Activated T-helper 1 cell treated with anti-CD3 and anti-CD28 coated beads, Interleukin-12 subunit alpha, Interleukin-12 subunit beta, Interleukin-2, Interleukin-4 antibody, amounts not matched to agents 30 ng/mL and 10 ng/mL and 1 ng/mL, durations not matched to agents 14 hours and 24 hours and 36 hours (primary cell): ENCODE measurements at regions of chr7 and their contacts with region 1.

Region 1: DNA sequence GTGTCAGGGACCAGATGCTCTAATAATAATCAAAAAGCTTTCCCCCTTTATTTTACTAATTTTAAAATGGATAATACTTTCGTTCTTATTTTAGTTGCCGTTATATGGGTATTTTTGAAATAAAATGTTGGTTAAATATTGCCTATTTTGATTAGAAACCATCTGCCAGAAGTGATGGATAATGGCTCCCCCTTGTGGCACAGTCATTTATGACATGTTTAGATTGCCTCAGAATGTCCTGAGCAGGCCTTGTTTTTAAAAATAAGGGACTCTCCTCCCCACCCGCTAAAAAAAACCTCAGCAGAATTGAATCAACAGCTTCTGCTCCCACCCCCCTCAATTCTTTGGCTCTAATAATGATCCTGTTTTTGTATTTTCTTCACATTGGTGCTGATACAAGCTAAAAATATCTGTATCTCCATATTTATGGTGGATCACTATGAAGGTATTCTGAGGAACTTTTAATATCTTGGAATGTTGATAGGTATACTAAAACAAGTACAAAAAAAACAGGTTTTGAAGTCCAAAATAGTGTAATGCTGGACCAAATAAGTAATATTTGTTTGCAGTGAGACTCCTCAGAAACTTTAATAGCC is 38.8 kb downstream of the TMEM60 start:
- DNase-seq: peak; percentile 51
- H3K4me3 Mint-ChIP-seq: no peak overlapping the region
- H3K27ac Mint-ChIP-seq: no peak overlapping the region
- H3K4me1 Mint-ChIP-seq: peaks cover 25% of the 10 kb centered on the region
- H3K27me3 Mint-ChIP-seq: no peaks in the 10 kb centered on the region

Region 2: DNA sequence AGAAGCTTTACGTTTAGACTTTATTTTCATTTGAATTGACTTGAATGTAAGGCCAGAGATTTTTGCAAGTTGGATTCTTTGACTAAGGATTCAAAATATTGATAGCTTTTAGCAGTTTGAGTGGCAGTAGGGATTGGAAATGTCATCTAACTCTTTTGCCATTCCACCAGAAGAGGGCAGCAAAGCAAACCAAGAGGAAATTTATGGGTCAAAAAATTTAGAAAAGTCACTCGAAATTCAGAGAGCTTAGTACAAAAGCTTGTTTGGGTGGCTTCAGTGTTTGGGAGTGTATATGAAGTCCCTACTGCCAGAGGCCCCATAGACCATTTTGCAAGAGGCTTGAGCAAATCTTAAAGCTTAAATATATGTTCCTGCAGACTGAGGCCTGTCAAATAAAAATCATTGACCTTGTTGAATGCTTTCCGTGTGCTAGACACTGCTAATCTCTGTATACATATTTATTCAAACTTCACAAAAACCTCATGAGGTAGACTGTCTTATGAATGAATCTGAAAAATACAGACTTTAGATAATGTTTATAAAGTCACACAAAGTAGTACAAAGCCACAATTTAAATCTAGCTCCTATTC is 107.7 kb before region 1 on chr7:
- intact Hi-C with region 1: loop called (anchors 1 kb)
- DNase-seq: peak; percentile 10
- H3K4me3 Mint-ChIP-seq: no peak overlapping the region
- H3K27ac Mint-ChIP-seq: no peak overlapping the region
- H3K4me1 Mint-ChIP-seq: no peaks in the 10 kb centered on the region
- H3K27me3 Mint-ChIP-seq: no peaks in the 10 kb centered on the region

Region 3: GRCh38 chr7:77696198-77697028 is 63.0 kb before region 1 on chr7 and contains the start of gene RSBN1L:
- intact Hi-C with region 1: loop called (anchors 1 kb)
- DNase-seq: peak; percentile 98
- H3K4me3 Mint-ChIP-seq: peak within 1 kb of the TSS; percentile 99
- H3K27ac Mint-ChIP-seq: peak within 1 kb of the TSS; percentile 94
- H3K4me1 Mint-ChIP-seq: peaks cover 55% of the 10 kb centered on the region
- H3K27me3 Mint-ChIP-seq: no peaks in the 10 kb centered on the region
- total RNA-seq, gene RSBN1L: 27.9 and 30.6 TPM in 2 replicates

Region 4: GRCh38 chr7:78090616-78091015 is 331.2 kb after region 1 on chr7:
- intact Hi-C with region 1: no loop called
- DNase-seq: no peak
- H3K4me3 Mint-ChIP-seq: no peak overlapping the region
- H3K27ac Mint-ChIP-seq: no peak overlapping the region
- H3K4me1 Mint-ChIP-seq: no peaks in the 10 kb centered on the region
- H3K27me3 Mint-ChIP-seq: no peaks in the 10 kb centered on the region